ENCODE measurements at regions of chr3 and their contacts with region 1.

Region 1: GRCh38 chr3:46078712-46079400 is 51.6 kb upstream of the XCR1 start:
- DNase-seq: peak; percentile 93
- ATAC-seq: peak; percentile 98
- H3K4me3 Mint-ChIP-seq: no peak overlapping the region
- H3K27ac Mint-ChIP-seq: no peak overlapping the region
- H3K4me1 Mint-ChIP-seq: peaks cover 3% of the 10 kb centered on the region
- H3K27me3 Mint-ChIP-seq: peaks cover 23% of the 10 kb centered on the region

Region 2: DNA sequence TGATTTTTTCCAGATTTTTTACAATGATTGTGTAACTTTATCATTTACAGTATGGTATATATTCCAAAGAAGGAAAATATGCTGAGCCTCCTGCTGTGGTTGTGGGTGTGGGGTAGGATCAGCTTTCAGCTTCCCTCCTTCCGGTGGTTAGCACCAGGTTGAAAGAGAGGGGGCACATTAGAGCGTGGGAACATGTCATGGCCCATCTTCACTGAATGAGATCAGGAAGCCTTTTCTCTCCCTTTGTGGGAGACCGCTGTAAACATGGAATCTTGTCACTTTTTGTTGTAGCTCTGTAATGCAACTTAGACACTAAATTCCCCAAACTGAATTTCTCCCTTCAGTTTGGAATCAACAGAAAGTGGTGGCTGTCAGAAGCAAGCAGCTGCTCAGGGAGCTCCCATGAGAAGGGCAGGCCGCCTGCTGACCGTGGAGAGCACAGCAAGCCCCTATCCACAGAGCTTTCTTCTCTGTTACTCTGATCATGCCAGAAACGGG is 571.0 kb before region 1 on chr3:
- CTCF ChIA-PET with region 1: interaction called, 3 read pairs
- POLR2A ChIA-PET with region 1: no interaction called
- intact Hi-C with region 1: loop called (anchors 5 to 10 kb)
- DNase-seq: no peak
- ATAC-seq: no peak
- H3K4me3 Mint-ChIP-seq: no peak overlapping the region
- H3K27ac Mint-ChIP-seq: no peak overlapping the region
- H3K4me1 Mint-ChIP-seq: peaks cover 13% of the 10 kb centered on the region
- H3K27me3 Mint-ChIP-seq: no peaks in the 10 kb centered on the region

Region 3: DNA sequence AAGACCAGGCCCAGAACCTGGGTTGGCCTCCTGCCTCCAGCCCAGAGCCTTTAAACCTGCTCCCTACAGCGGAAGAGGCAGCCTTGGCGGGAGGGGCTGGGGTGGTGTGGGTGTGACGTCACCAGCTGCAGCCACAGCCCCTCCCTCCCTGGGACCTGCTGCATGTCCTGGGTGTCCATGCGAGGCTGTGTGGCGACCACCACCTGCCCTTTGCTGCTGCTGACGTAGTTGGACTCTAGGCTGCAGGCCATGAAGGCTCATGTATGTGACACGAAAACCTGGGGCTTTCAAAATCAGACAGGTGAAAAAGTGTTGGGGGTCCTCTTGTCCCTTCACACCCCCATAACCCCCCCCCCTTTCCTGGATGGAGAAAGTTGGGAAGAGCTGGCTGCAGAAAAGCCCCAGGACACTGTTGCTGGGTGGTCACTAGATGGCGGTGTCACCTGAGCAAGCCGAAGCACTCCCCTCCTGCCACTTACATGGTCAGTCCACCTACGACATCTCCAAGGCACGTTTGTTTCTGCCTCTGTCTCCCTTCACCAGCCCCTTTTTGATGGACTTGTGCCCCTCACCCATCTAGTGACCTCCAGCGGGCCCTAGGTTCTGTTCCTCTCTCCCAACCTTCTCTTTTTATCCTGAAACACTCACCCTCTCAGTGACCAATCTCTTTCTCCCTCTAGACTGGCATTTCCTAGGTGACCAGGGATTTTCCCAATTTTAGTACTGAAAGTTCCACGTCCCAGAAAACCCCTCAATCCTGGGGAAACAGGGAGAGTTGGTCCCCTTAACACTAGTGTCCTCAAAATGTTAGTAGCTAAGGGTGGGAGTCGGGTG is 317.8 kb before region 1 on chr3:
- CTCF ChIA-PET with region 1: interaction called, 6 read pairs
- POLR2A ChIA-PET with region 1: no interaction called
- intact Hi-C with region 1: loop called (anchors 1 to 2 kb)
- DNase-seq: peak; percentile 68
- ATAC-seq: peak; percentile 69
- H3K4me3 Mint-ChIP-seq: no peak overlapping the region
- H3K27ac Mint-ChIP-seq: no peak overlapping the region
- H3K4me1 Mint-ChIP-seq: no peaks in the 10 kb centered on the region
- H3K27me3 Mint-ChIP-seq: peaks cover 3% of the 10 kb centered on the region

Region 4: GRCh38 chr3:45938864-45939263 is 140.0 kb before region 1 on chr3:
- CTCF ChIA-PET with region 1: interaction called, 269 read pairs
- POLR2A ChIA-PET with region 1: interaction called, 4 read pairs
- intact Hi-C with region 1: loop called (anchors 1 kb)
- DNase-seq: peak; percentile 92
- ATAC-seq: peak; percentile 66
- H3K4me3 Mint-ChIP-seq: no peak overlapping the region
- H3K27ac Mint-ChIP-seq: no peak overlapping the region
- H3K4me1 Mint-ChIP-seq: peaks cover 27% of the 10 kb centered on the region
- H3K27me3 Mint-ChIP-seq: peaks cover 15% of the 10 kb centered on the region

Region 5: GRCh38 chr3:45978006-45978761 is 100.7 kb before region 1 on chr3:
- CTCF ChIA-PET with region 1: interaction called, 13 read pairs
- POLR2A ChIA-PET with region 1: no interaction called
- intact Hi-C with region 1: no loop called
- DNase-seq: peak; percentile 82
- ATAC-seq: peak; percentile 20
- H3K4me3 Mint-ChIP-seq: peak overlapping the region; percentile 22
- H3K27ac Mint-ChIP-seq: peak overlapping the region; percentile 91
- H3K4me1 Mint-ChIP-seq: peaks cover 71% of the 10 kb centered on the region
- H3K27me3 Mint-ChIP-seq: peaks cover 2% of the 10 kb centered on the region

Region 6: GRCh38 chr3:46089237-46090011 is 10.6 kb after region 1 on chr3:
- CTCF ChIA-PET with region 1: interaction called, 24 read pairs
- POLR2A ChIA-PET with region 1: no interaction called
- intact Hi-C with region 1: no loop called
- DNase-seq: peak; percentile 51
- ATAC-seq: peak; percentile 54
- H3K4me3 Mint-ChIP-seq: no peak overlapping the region
- H3K27ac Mint-ChIP-seq: no peak overlapping the region
- H3K4me1 Mint-ChIP-seq: peaks cover 14% of the 10 kb centered on the region
- H3K27me3 Mint-ChIP-seq: peaks cover 44% of the 10 kb centered on the region